ENCODE measurements at regions of chr10 and their contacts with region 1.

Region 1: DNA sequence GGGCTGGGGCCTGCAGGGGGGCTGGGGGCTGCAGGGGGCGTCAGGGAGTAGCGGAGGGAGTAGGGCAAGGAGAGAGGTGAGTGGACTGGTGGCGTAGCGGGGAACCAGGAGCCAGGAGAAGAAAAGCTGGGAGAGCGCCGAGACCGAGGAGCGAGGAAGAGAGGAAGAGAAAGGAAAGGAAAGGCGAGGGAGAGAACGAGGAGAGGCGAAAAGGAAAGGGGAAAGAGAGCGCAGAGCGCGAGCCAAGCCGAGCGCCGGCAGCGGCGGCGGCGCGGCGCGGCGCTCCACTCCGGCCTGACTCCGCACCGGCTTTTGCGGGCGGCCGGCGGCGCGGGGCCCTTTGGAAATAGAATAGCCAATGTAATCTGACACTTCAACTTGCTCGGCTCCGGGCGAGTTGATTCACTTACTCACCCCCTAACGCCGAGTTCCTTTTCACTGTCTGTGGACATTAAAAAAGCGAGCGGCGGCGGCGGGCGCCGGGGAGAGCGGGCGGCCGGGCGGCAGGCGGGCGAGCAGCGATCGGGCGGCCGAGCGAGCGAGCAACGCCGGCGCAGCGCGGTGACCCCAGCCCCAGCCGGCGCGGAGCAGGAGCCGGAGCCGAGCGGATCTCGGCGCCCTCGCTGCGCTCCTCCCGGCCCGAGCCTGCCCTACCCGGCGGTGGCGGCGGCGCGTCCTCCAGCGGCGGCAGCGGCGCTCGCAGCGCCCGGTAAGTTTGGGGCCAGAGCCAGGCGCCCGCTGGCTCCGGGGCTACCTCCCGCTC is at the start of gene ZMIZ1:
- DNase-seq: peak; percentile 81
- H3K4me3 Mint-ChIP-seq: peak within 1 kb of the TSS; percentile 86
- H3K27ac Mint-ChIP-seq: peak within 1 kb of the TSS; percentile 80
- H3K4me1 Mint-ChIP-seq: peaks cover 29% of the 10 kb centered on the region
- H3K27me3 Mint-ChIP-seq: peaks cover 13% of the 10 kb centered on the region
- total RNA-seq, gene ZMIZ1: 79.2 and 80.4 TPM in 2 replicates

Region 2: GRCh38 chr10:79047875-79048638 is 20.7 kb before region 1 on chr10:
- intact Hi-C with region 1: loop called (anchors 1 kb)
- DNase-seq: peak; percentile 75
- H3K4me3 Mint-ChIP-seq: peak overlapping the region; percentile 69
- H3K27ac Mint-ChIP-seq: peak overlapping the region; percentile 97
- H3K4me1 Mint-ChIP-seq: peaks cover 35% of the 10 kb centered on the region
- H3K27me3 Mint-ChIP-seq: peaks cover 3% of the 10 kb centered on the region

Region 3: GRCh38 chr10:79137826-79138225 is 69.1 kb after region 1 on chr10:
- intact Hi-C with region 1: loop called (anchors 1 kb)
- DNase-seq: peak; percentile 50
- H3K4me3 Mint-ChIP-seq: peak overlapping the region; percentile 62
- H3K27ac Mint-ChIP-seq: peak overlapping the region; percentile 91
- H3K4me1 Mint-ChIP-seq: peaks cover 39% of the 10 kb centered on the region
- H3K27me3 Mint-ChIP-seq: no peaks in the 10 kb centered on the region

Measured in activated T-helper 2 cell treated with anti-CD3 and anti-CD28 coated beads, Interferon-gamma antibody, Interleukin-2, Interleukin-4, amounts not matched to agents 10 μg/mL and 5 μg/mL and 100 μg/mL, durations not matched to agents 14 hours and 24 hours and 36 hours (primary cell).